Naive thymus-derived CD4-positive, alpha-beta T cell (primary cell): ENCODE measurements at regions of chr10 and their contacts with region 1.

Region 1: DNA sequence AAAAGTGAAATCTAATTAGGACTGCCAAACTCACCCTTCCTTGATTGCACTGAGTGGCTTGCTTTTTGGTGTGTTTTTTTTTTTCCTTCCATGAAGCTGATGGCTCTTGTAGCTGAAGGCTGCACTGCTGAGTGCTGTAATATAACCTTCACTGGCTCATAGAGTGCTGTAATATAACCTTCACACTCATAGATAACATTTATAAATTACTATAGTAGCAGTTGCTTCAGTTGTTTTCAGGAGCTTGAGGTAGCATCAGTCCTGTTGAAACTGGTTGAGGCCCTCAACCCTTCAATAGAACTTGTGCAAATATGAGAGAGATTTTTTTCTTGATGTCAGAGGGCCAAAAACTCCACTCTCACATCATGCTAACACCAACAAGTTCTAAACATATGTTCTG is 404.9 kb upstream of the MBL2 start:
- DNase-seq: no peak
- ATAC-seq: no peak
- H3K4me3 ChIP-seq: no peak overlapping the region
- H3K4me3 Mint-ChIP-seq: no peak overlapping the region
- H3K27ac ChIP-seq: no peak overlapping the region
- H3K27ac Mint-ChIP-seq: no peak overlapping the region
- H3K4me1 ChIP-seq: no peaks in the 10 kb centered on the region
- H3K4me1 Mint-ChIP-seq: no peaks in the 10 kb centered on the region
- H3K27me3 ChIP-seq: no peaks in the 10 kb centered on the region
- H3K27me3 Mint-ChIP-seq: no peaks in the 10 kb centered on the region

Region 2: GRCh38 chr10:52778511-52779392 is 398.7 kb before region 1 on chr10:
- CTCF ChIA-PET with region 1: no interaction called
- POLR2A ChIA-PET with region 1: no interaction called
- intact Hi-C with region 1: no loop called
- DNase-seq: no peak
- ATAC-seq: no peak
- H3K4me3 ChIP-seq: no peak overlapping the region
- H3K4me3 Mint-ChIP-seq: no peak overlapping the region
- H3K27ac ChIP-seq: no peak overlapping the region
- H3K27ac Mint-ChIP-seq: no peak overlapping the region
- H3K4me1 ChIP-seq: no peaks in the 10 kb centered on the region
- H3K4me1 Mint-ChIP-seq: no peaks in the 10 kb centered on the region
- H3K27me3 ChIP-seq: no peaks in the 10 kb centered on the region
- H3K27me3 Mint-ChIP-seq: peaks cover 0 to 4% (median 0%) of the 10 kb centered on the region in 5 donors

Region 3: GRCh38 chr10:53122281-53122680 is 55.2 kb before region 1 on chr10:
- CTCF ChIA-PET with region 1: no interaction called
- POLR2A ChIA-PET with region 1: no interaction called
- intact Hi-C with region 1: loop called in 1 of 2 experiments (anchors 2 kb)
- DNase-seq: no peak
- ATAC-seq: peak; percentile 31
- H3K4me3 ChIP-seq: no peak overlapping the region
- H3K4me3 Mint-ChIP-seq: no peak overlapping the region
- H3K27ac ChIP-seq: no peak overlapping the region
- H3K27ac Mint-ChIP-seq: no peak overlapping the region
- H3K4me1 ChIP-seq: no peaks in the 10 kb centered on the region
- H3K4me1 Mint-ChIP-seq: no peaks in the 10 kb centered on the region
- H3K27me3 ChIP-seq: no peaks in the 10 kb centered on the region
- H3K27me3 Mint-ChIP-seq: no peaks in the 10 kb centered on the region

Region 4: GRCh38 chr10:53284615-53285177 is 107.2 kb after region 1 on chr10:
- CTCF ChIA-PET with region 1: no interaction called
- POLR2A ChIA-PET with region 1: no interaction called
- intact Hi-C with region 1: no loop called
- DNase-seq: no peak
- ATAC-seq: no peak
- H3K4me3 ChIP-seq: no peak overlapping the region
- H3K4me3 Mint-ChIP-seq: no peak overlapping the region
- H3K27ac ChIP-seq: no peak overlapping the region
- H3K27ac Mint-ChIP-seq: no peak overlapping the region
- H3K4me1 ChIP-seq: no peaks in the 10 kb centered on the region
- H3K4me1 Mint-ChIP-seq: no peaks in the 10 kb centered on the region
- H3K27me3 ChIP-seq: no peaks in the 10 kb centered on the region
- H3K27me3 Mint-ChIP-seq: no peaks in the 10 kb centered on the region